ENCODE measurements at regions of chr16 and their contacts with region 1.

Region 1: GRCh38 chr16:55760310-55761001 is 72.4 kb downstream of the CES1 start:
- DNase-seq: no peak
- H3K4me3 ChIP-seq: no peak overlapping the region
- H3K27ac ChIP-seq: peak overlapping the region in 1 of 2 donors; percentile 45
- H3K4me1 ChIP-seq: no peaks in the 10 kb centered on the region
- H3K27me3 ChIP-seq: no peaks in the 10 kb centered on the region
- CTCF ChIP-seq: no peak
- POLR2A ChIP-seq: no peak

Region 2: GRCh38 chr16:55465077-55465896 is 295.2 kb before region 1 on chr16:
- intact Hi-C with region 1: no loop called
- DNase-seq: peak; percentile 88
- H3K4me3 ChIP-seq: no peak overlapping the region
- H3K27ac ChIP-seq: no peak overlapping the region
- H3K4me1 ChIP-seq: no peaks in the 10 kb centered on the region
- H3K27me3 ChIP-seq: no peaks in the 10 kb centered on the region
- CTCF ChIP-seq: peak; percentile 99 to 100 (median 100)
- POLR2A ChIP-seq: no peak

Region 3: DNA sequence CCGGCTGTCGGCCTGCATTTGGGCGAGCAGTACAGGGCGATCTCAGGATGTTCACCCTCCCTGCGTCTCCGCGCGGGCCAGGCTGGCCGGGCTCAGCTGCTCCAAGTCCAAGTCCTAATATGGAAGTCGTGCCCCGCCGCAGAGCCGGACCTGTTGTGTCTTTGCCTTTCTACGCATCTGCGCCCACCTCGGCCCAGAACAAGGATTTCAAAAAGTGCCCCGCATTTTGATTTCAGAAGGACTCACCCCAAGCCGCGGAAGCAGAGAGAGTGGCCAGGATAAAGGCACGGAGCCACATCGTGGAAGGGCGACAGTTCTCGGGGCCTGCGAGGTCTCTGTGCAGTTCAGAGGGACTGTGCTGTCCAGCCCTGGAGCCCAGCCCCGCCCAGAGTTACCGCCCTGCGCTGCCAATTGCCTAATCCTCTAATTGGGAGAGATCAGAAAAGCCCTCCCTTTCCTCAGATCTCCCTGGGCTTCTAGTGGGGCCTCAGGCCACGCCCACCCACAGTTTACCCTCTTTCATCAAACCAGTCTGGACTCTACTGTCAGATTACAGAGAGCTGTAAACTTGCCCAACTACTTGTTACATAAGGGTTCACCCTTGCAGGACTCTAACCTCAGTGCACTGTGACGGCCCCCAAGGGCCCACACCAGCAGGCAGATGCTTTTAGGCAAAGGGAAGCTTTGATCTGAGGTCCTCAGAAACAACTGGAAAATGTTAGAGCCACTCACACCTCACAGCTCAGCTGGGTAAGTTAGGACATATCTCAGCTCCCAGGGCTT is 72.5 kb after region 1 on chr16 and contains the start of gene CES1:
- intact Hi-C with region 1: loop called (anchors 10 kb)
- DNase-seq: no peak
- H3K4me3 ChIP-seq: no peak within 1 kb of the TSS
- H3K27ac ChIP-seq: peak within 1 kb of the TSS in 1 of 2 donors; percentile 26
- H3K4me1 ChIP-seq: no peaks in the 10 kb centered on the region
- H3K27me3 ChIP-seq: no peaks in the 10 kb centered on the region
- CTCF ChIP-seq: no peak
- POLR2A ChIP-seq: no peak
- total RNA-seq, gene CES1: 16.0 to 18.7 TPM